PC-9 (cell line): ENCODE measurements at regions of chr9 and their contacts with region 1.

Region 1: DNA sequence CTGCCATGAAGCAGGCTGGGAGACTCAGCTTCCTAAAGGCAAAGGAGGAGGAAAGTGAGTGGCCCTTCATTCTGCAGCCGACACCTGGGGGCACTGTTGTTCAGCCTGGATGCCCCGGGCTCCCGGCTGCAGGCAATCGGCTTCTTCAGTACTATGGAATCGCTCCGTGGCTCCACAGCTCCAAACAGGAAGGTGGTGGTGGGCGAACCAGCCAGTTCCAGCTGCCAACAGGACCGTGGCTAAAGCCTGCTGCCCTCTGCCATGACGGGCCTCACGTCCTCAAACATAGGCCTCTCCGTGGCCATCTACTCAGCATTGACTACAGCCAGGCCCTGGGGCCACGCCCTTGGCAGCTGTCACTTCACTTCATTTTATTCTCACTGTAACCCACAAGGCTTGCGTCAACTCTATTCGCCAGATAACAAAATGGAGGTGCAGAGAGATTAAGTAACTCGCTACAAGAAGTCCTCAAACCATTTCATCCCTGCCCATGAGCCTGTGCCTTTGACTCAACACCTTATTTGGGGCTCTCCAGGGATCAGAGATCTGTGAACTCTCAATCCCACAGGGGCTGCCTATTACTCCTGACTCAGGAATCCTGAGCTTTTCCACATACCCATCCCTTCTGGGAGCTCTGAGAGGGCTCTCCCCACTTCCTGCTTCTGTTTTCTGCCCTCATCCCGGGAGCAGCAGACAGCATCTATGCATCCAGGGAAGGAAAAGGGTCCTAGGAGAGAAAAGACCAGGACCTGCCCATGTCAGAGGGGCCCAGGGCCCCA is 38.0 kb downstream of the PAX5 start:
- DNase-seq: peak; percentile 40 to 66
- H3K4me3 ChIP-seq: peak overlapping the region; percentile 33; the same call in 1 of the 2 replicates
- H3K27ac ChIP-seq: no peak overlapping the region
- H3K4me1 ChIP-seq: peaks cover 4% of the 10 kb centered on the region; the same call in 1 of the 2 replicates
- H3K27me3 ChIP-seq: no peaks in the 10 kb centered on the region
- CTCF ChIP-seq: peak; percentile 65

Region 2: DNA sequence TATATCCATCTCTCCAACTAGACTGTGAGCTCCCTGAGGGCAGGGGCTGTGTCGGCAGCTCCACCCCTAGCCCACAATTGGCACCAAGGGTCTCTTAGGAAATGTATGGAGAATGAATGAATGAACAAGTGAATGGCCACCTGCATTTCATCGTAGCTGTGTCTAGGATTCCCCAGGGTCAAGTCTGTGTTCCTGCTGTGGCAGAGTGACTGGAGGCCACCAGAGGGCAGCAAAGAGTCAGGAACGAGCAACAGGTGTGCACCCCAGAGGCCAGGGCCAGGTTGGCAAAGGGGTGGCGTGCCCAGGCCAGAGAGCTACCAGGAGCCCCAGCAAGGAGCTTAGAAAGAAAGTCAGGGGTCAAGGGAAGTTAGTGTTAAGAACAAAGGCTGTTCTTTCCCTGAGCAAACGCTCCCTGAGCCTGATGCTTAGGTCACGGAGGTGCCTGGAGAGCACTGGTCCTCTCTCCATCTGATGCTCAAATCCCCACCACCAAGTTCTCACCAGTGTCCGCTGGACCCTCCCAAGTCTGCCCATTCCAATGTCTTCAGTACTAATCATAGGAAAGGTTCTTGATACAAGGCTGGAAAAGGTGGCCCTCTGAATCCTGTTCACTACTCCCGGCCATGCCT is 122.8 kb before region 1 on chr9:
- CTCF ChIA-PET with region 1: interaction called, 11 read pairs
- POLR2A ChIA-PET with region 1: no interaction called
- intact Hi-C with region 1: loop called (anchors 1 kb)
- DNase-seq: peak; percentile 40 to 56
- H3K4me3 ChIP-seq: no peak overlapping the region
- H3K27ac ChIP-seq: no peak overlapping the region
- H3K4me1 ChIP-seq: no peaks in the 10 kb centered on the region
- H3K27me3 ChIP-seq: peaks cover 20% of the 10 kb centered on the region
- CTCF ChIP-seq: peak; percentile 88

Region 3: DNA sequence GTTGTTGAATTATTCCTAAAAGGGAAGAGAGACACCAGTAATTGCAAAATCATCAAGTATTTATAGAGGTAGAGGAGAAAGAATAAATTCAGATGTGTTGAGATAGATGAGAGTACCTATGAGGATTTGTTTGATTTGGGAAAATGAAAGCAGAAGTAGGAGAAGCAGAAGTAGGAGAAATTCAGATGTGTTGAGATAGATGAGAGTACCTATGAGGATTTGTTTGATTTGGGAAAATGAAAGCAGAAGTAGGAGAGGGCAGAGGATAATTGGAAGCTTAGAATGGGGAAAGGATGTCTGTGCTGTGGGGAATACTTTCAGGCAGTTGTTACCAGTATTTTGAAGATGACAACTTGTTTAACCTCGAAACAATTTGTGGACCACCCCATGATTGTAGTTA is 89.1 kb after region 1 on chr9:
- CTCF ChIA-PET with region 1: no interaction called
- POLR2A ChIA-PET with region 1: no interaction called
- intact Hi-C with region 1: no loop called
- DNase-seq: no peak
- H3K4me3 ChIP-seq: no peak overlapping the region
- H3K27ac ChIP-seq: no peak overlapping the region
- H3K4me1 ChIP-seq: peaks cover 7% of the 10 kb centered on the region
- H3K27me3 ChIP-seq: no peaks in the 10 kb centered on the region
- CTCF ChIP-seq: no peak

Region 4: DNA sequence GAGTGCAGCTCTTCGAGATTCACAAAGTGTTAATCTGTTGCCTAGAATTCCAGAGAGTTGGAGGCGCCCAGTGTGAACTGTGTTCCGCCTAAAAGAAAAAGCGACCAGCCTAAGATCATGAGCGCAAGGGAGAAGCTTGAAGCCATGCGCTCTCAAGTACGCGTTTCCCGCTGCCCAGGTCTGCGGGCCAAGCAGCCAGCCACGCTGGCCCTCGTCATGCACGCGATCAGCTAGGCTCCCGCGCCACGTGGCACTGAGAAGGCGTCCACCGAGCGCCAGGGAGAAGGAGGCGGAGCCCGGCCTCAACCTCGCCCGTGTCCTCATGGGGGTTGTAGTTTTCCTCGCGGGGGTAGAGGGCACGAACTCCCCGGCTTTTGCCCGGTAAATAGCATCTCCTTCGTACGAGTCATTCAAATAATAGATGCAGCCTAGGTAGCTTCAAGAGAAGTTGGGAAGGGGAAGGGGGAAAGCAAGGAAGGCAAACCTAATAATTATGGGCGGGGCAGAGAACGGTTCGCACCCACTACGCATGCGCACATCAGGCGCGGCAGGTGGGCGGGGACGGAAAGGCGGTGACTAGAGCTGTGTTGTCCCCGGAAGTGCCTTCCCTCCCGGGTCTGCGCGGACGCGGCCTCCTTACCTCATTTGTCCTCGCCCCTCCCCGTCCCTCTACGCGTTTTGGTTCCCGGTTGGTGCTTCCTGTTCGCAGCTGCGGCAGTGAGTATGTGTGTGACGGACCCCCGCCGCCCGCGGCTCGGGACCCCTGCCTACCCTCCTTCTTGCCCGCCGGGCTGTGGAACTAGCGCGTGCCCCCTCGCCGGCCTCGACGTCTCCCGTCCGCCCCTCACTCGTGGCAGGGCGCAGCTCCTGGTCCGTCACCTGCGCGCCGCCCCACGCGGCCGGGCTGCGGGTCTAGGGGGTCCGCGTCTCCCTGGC is 124.1 kb after region 1 on chr9 and contains the start of gene ZCCHC7:
- CTCF ChIA-PET with region 1: interaction called, 7 read pairs
- POLR2A ChIA-PET with region 1: no interaction called
- intact Hi-C with region 1: loop called (anchors 5 kb)
- DNase-seq: peak; percentile 77 to 88
- H3K4me3 ChIP-seq: peak within 1 kb of the TSS; percentile 92
- H3K27ac ChIP-seq: peak within 1 kb of the TSS; percentile 51
- H3K4me1 ChIP-seq: 0 out of 2 replicates have a peak, but pooled peaks cover 12% of the 10 kb centered on the region
- H3K27me3 ChIP-seq: no peaks in the 10 kb centered on the region
- CTCF ChIP-seq: no peak
- total RNA-seq, gene ZCCHC7: 14.1 and 15.9 TPM in 2 replicates

Region 5: GRCh38 chr9:37197158-37198038 is 201.3 kb after region 1 on chr9:
- CTCF ChIA-PET with region 1: interaction called, 11 read pairs
- POLR2A ChIA-PET with region 1: no interaction called
- intact Hi-C with region 1: no loop called
- DNase-seq: no peak
- H3K4me3 ChIP-seq: no peak overlapping the region
- H3K27ac ChIP-seq: no peak overlapping the region
- H3K4me1 ChIP-seq: peaks cover 12% of the 10 kb centered on the region
- H3K27me3 ChIP-seq: no peaks in the 10 kb centered on the region
- CTCF ChIP-seq: no peak

Region 6: DNA sequence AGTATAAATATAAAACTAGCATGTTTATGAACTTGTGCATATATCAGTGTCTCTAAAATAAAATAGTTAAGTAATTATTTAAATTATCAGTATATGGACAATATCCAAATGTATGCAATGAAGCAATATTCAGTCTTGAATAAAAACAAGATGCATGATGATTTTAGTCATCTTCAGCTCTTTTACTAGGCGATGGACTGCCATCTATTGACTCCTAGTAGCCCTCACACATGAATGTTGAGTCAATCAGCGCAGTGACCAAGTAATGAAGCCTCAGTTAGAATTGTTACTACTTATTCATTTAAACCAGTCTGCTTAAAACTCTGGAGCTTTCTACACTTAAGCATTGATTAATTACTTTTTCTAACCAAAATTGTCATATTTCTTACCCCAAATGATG is 333.5 kb after region 1 on chr9:
- CTCF ChIA-PET with region 1: no interaction called
- POLR2A ChIA-PET with region 1: no interaction called
- intact Hi-C with region 1: loop called (anchors 1 kb)
- DNase-seq: no peak
- H3K4me3 ChIP-seq: no peak overlapping the region
- H3K27ac ChIP-seq: no peak overlapping the region
- H3K4me1 ChIP-seq: no peaks in the 10 kb centered on the region
- H3K27me3 ChIP-seq: no peaks in the 10 kb centered on the region
- CTCF ChIP-seq: 0 out of 2 replicates have a peak, but pooled peaks have one; percentile 7